ENCODE measurements at regions of chr15 and their contacts with region 1.

Region 1: DNA sequence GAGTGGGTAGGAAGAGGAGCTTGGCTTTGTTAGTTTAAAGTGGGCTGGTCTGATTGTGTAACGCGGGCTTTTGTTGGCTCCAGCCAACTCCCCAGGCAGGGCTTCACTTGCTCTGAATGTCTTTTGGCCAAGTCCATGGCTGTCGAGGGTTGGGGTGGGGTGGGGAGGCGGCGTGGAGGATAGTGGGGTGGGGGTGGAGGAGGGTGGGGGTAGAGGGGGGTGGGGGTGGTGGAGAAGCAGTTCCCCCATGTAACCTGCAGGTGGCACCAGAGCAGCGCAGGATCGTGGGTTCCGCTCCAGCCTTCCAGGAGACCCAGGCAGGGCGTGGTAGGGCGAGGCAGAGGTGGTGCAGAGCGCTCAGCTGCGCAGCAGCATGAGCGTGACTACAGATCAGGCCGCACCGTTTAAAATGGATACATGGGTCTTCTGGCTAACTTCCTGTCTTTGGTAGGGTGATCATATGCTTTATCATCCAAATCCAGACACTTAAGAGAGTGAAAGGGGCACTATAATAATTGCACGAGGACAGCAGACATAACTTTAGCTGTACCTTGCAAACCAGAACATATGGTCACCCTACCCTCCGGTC is 28.3 kb downstream of the GOLGA6A start:
- DNase-seq: peak; percentile 84
- ATAC-seq: peak; percentile 100
- H3K4me3 Mint-ChIP-seq: no peak overlapping the region
- H3K27ac Mint-ChIP-seq: no peak overlapping the region
- H3K4me1 Mint-ChIP-seq: peaks cover 13% of the 10 kb centered on the region
- H3K27me3 Mint-ChIP-seq: peaks cover 2% of the 10 kb centered on the region
- CTCF ChIP-seq: peak; percentile 36

Region 2: GRCh38 chr15:73633111-73633990 is 420.7 kb before region 1 on chr15 and contains the start of gene NPTN:
- CTCF ChIA-PET with region 1: no interaction called
- POLR2A ChIA-PET with region 1: no interaction called
- intact Hi-C with region 1: no loop called
- DNase-seq: peak; percentile 98
- ATAC-seq: peak; percentile 94
- H3K4me3 Mint-ChIP-seq: peak within 1 kb of the TSS; percentile 75
- H3K27ac Mint-ChIP-seq: peak within 1 kb of the TSS; percentile 71
- H3K4me1 Mint-ChIP-seq: peaks cover 49% of the 10 kb centered on the region
- H3K27me3 Mint-ChIP-seq: peaks cover 12% of the 10 kb centered on the region
- CTCF ChIP-seq: no peak
- total RNA-seq, gene NPTN: 27.4 to 33.6 TPM

Region 3: DNA sequence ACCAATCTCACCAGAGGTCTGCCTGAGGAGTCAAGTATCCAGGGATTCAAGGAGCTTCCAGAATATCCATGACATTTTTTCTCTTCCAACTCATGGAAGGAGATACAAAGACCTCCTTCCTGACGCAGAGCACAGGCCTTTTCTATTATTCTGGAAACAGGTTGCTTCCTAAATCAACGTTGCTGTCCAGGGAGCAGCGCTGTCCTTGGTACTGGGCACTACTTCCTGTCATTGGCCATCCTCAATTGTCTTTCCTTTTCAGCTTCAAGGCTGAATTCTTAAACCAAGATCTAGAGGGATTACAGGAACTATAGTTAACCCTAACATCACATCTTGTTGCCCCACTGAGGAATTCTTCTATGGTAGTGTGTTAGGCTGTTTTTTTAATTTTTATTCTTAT is 231.0 kb before region 1 on chr15:
- CTCF ChIA-PET with region 1: no interaction called
- POLR2A ChIA-PET with region 1: no interaction called
- intact Hi-C with region 1: no loop called
- DNase-seq: peak; percentile 4
- ATAC-seq: no peak
- H3K4me3 Mint-ChIP-seq: no peak overlapping the region
- H3K27ac Mint-ChIP-seq: no peak overlapping the region
- H3K4me1 Mint-ChIP-seq: no peaks in the 10 kb centered on the region
- H3K27me3 Mint-ChIP-seq: peaks cover 9% of the 10 kb centered on the region
- CTCF ChIP-seq: no peak

Region 4: GRCh38 chr15:74036271-74037170 is 17.5 kb before region 1 on chr15:
- CTCF ChIA-PET with region 1: interaction called, 32 read pairs
- POLR2A ChIA-PET with region 1: no interaction called
- intact Hi-C with region 1: no loop called
- DNase-seq: no peak
- ATAC-seq: no peak
- H3K4me3 Mint-ChIP-seq: no peak overlapping the region
- H3K27ac Mint-ChIP-seq: no peak overlapping the region
- H3K4me1 Mint-ChIP-seq: no peaks in the 10 kb centered on the region
- H3K27me3 Mint-ChIP-seq: no peaks in the 10 kb centered on the region
- CTCF ChIP-seq: no peak

Region 5: GRCh38 chr15:74275957-74276356 is 221.9 kb after region 1 on chr15:
- CTCF ChIA-PET with region 1: no interaction called
- POLR2A ChIA-PET with region 1: no interaction called
- intact Hi-C with region 1: no loop called
- DNase-seq: peak; percentile 29
- ATAC-seq: peak; percentile 67
- H3K4me3 Mint-ChIP-seq: no peak overlapping the region
- H3K27ac Mint-ChIP-seq: no peak overlapping the region
- H3K4me1 Mint-ChIP-seq: no peaks in the 10 kb centered on the region
- H3K27me3 Mint-ChIP-seq: peaks cover 7% of the 10 kb centered on the region
- CTCF ChIP-seq: no peak